CD8-positive, alpha-beta T cell (primary cell): ENCODE measurements at regions of chr13 and their contacts with region 1.

Region 1: DNA sequence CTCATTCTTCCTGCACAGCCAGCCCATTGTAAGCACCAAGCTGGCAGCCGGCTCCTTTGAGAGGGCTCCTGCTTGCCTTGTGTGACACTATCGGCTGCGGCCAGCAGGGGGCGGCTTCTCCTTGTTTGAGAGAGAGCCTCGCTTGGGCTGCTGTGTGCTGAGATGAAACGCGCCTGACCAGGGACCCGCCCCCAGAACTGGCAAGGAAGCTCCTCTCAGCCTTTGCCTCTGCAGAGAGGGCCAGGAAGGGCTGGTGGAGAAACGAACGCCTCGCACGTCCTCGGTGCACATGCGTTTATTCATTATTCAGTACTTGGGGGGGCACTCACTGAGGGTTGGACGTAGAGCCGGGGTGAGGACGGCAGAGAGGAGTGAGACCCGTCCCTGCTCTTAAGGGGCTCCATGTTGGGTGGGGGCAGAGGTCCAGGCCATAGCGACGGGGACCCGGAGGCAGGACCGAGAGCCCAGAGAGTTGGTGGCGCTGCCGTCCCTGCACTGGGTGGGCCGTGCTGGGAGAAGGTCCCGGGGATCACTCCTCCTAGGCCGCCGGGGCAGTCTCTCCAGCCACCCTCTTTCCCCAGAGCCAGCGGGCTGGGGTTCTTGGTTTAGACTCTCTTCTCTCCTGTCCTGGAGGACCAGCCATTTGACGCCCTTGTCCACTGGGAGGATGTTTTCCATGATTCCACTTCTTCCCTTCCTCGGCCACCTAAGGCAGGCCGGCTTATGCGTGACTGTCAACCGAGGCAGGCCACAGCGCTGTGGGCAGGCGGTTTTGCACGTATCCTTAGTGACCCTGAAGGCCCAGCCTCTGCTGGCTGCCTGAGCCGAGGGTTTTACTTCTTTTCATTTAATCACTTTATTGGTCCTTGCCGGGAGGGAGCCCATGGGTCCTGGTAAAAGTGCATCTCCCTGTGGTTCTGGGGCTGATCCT is 174.5 kb downstream of the KATNAL1 start:
- DNase-seq: peak; percentile 92 to 100 (median 97)
- ATAC-seq: peak; percentile 100
- H3K4me3 ChIP-seq: no peak overlapping the region
- H3K4me3 Mint-ChIP-seq: peak overlapping the region; percentile 65
- H3K27ac ChIP-seq: no peak overlapping the region
- H3K27ac Mint-ChIP-seq: peak overlapping the region; percentile 77
- H3K4me1 ChIP-seq: peaks cover 9% of the 10 kb centered on the region
- H3K4me1 Mint-ChIP-seq: peaks cover 12% of the 10 kb centered on the region
- H3K27me3 ChIP-seq: no peaks in the 10 kb centered on the region
- H3K27me3 Mint-ChIP-seq: no peaks in the 10 kb centered on the region
- CTCF ChIP-seq: peak; percentile 79

Region 2: GRCh38 chr13:29771247-29771646 is 361.6 kb before region 1 on chr13:
- CTCF ChIA-PET with region 1: interaction called, 11 read pairs
- POLR2A ChIA-PET with region 1: no interaction called
- intact Hi-C with region 1: no loop called
- DNase-seq: peak in 2 of 9 experiments; percentile 55 to 68
- ATAC-seq: peak; percentile 65
- H3K4me3 ChIP-seq: no peak overlapping the region
- H3K4me3 Mint-ChIP-seq: no peak overlapping the region
- H3K27ac ChIP-seq: no peak overlapping the region
- H3K27ac Mint-ChIP-seq: no peak overlapping the region
- H3K4me1 ChIP-seq: no peaks in the 10 kb centered on the region
- H3K4me1 Mint-ChIP-seq: no peaks in the 10 kb centered on the region
- H3K27me3 ChIP-seq: no peaks in the 10 kb centered on the region
- H3K27me3 Mint-ChIP-seq: no peaks in the 10 kb centered on the region
- CTCF ChIP-seq: peak; percentile 77

Region 3: GRCh38 chr13:30306762-30307193 is 173.9 kb after region 1 on chr13:
- CTCF ChIA-PET with region 1: interaction called, 7 read pairs
- POLR2A ChIA-PET with region 1: no interaction called
- intact Hi-C with region 1: loop called (anchors 1 kb)
- DNase-seq: peak; percentile 80 to 94 (median 92)
- ATAC-seq: peak; percentile 86
- H3K4me3 ChIP-seq: peak overlapping the region; percentile 79 to 97
- H3K4me3 Mint-ChIP-seq: peak overlapping the region; percentile 89
- H3K27ac ChIP-seq: peak overlapping the region; percentile 56 to 60
- H3K27ac Mint-ChIP-seq: peak overlapping the region; percentile 79
- H3K4me1 ChIP-seq: peaks cover 5% of the 10 kb centered on the region
- H3K4me1 Mint-ChIP-seq: peaks cover 8% of the 10 kb centered on the region
- H3K27me3 ChIP-seq: no peaks in the 10 kb centered on the region
- H3K27me3 Mint-ChIP-seq: no peaks in the 10 kb centered on the region
- CTCF ChIP-seq: no peak

Region 4: DNA sequence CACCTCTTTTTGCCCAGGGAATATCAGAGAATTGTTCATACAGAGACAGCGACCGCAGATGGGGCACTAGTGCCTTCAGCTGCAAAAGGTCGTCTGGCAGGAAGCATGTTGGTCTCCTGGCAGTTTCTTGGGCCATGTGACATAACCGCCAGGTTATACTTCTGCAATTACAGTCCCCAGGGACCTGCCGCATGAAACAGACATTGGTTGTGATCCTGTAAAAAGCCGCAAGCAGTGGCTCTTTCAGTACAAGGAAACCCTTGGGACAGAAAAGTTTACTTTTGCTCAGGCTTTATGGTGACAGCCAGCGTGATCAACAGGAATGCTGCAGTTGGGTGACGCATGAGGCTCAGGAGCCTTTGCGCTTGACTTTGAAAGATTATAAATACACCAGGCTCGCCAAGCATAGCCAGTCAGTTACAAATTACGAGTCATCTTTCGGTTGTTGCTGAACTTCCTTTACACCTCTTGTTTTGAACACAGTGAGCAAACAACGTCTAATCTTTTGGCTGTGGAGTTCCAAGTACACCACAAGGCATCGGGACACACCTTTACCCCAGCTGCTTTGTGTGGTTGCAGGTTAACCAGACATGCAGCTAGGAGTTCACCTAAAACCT is 238.9 kb after region 1 on chr13:
- CTCF ChIA-PET with region 1: interaction called, 8 read pairs
- POLR2A ChIA-PET with region 1: interaction called, 4 read pairs
- intact Hi-C with region 1: loop called in 1 of 2 experiments (anchors 2 kb)
- DNase-seq: peak; percentile 39 to 90 (median 75)
- ATAC-seq: peak; percentile 55
- H3K4me3 ChIP-seq: peak overlapping the region; percentile 2 to 9
- H3K4me3 Mint-ChIP-seq: peak overlapping the region; percentile 67
- H3K27ac ChIP-seq: peak overlapping the region; percentile 53 to 66
- H3K27ac Mint-ChIP-seq: peak overlapping the region; percentile 94
- H3K4me1 ChIP-seq: peaks cover 77% of the 10 kb centered on the region
- H3K4me1 Mint-ChIP-seq: peaks cover 82% of the 10 kb centered on the region
- H3K27me3 ChIP-seq: no peaks in the 10 kb centered on the region
- H3K27me3 Mint-ChIP-seq: no peaks in the 10 kb centered on the region
- CTCF ChIP-seq: no peak

Region 5: GRCh38 chr13:30572859-30573275 is 440.0 kb after region 1 on chr13:
- CTCF ChIA-PET with region 1: interaction called, 10 read pairs
- POLR2A ChIA-PET with region 1: no interaction called
- intact Hi-C with region 1: loop called (anchors 1 to 5 kb)
- DNase-seq: peak in 4 of 9 experiments; percentile 12 to 72 (median 40)
- ATAC-seq: peak; percentile 57
- H3K4me3 ChIP-seq: peak overlapping the region; percentile 23 to 51
- H3K4me3 Mint-ChIP-seq: peak overlapping the region; percentile 75
- H3K27ac ChIP-seq: peak overlapping the region; percentile 58 to 72
- H3K27ac Mint-ChIP-seq: peak overlapping the region; percentile 91
- H3K4me1 ChIP-seq: peaks cover 27% of the 10 kb centered on the region
- H3K4me1 Mint-ChIP-seq: peaks cover 32% of the 10 kb centered on the region
- H3K27me3 ChIP-seq: no peaks in the 10 kb centered on the region
- H3K27me3 Mint-ChIP-seq: no peaks in the 10 kb centered on the region
- CTCF ChIP-seq: peak; percentile 44

Region 6: GRCh38 chr13:30865123-30866049 is 732.5 kb after region 1 on chr13:
- CTCF ChIA-PET with region 1: no interaction called
- POLR2A ChIA-PET with region 1: no interaction called
- intact Hi-C with region 1: loop called (anchors 1 to 5 kb)
- DNase-seq: peak in 8 of 9 experiments; percentile 24 to 68 (median 48)
- ATAC-seq: peak; percentile 93
- H3K4me3 ChIP-seq: no peak overlapping the region
- H3K4me3 Mint-ChIP-seq: no peak overlapping the region
- H3K27ac ChIP-seq: no peak overlapping the region
- H3K27ac Mint-ChIP-seq: no peak overlapping the region
- H3K4me1 ChIP-seq: no peaks in the 10 kb centered on the region
- H3K4me1 Mint-ChIP-seq: peaks cover 2% of the 10 kb centered on the region
- H3K27me3 ChIP-seq: no peaks in the 10 kb centered on the region
- H3K27me3 Mint-ChIP-seq: peaks cover 9% of the 10 kb centered on the region
- CTCF ChIP-seq: peak; percentile 97

Region 7: GRCh38 chr13:30978981-30979956 is 846.4 kb after region 1 on chr13:
- CTCF ChIA-PET with region 1: no interaction called
- POLR2A ChIA-PET with region 1: no interaction called
- intact Hi-C with region 1: no loop called
- DNase-seq: peak in 6 of 9 experiments; percentile 9 to 49 (median 32)
- ATAC-seq: no peak
- H3K4me3 ChIP-seq: no peak overlapping the region
- H3K4me3 Mint-ChIP-seq: no peak overlapping the region
- H3K27ac ChIP-seq: no peak overlapping the region
- H3K27ac Mint-ChIP-seq: no peak overlapping the region
- H3K4me1 ChIP-seq: no peaks in the 10 kb centered on the region
- H3K4me1 Mint-ChIP-seq: no peaks in the 10 kb centered on the region
- H3K27me3 ChIP-seq: no peaks in the 10 kb centered on the region
- H3K27me3 Mint-ChIP-seq: peaks cover 6% of the 10 kb centered on the region
- CTCF ChIP-seq: no peak